ENCODE measurements at regions of chr16 and their contacts with region 1.

Region 1: DNA sequence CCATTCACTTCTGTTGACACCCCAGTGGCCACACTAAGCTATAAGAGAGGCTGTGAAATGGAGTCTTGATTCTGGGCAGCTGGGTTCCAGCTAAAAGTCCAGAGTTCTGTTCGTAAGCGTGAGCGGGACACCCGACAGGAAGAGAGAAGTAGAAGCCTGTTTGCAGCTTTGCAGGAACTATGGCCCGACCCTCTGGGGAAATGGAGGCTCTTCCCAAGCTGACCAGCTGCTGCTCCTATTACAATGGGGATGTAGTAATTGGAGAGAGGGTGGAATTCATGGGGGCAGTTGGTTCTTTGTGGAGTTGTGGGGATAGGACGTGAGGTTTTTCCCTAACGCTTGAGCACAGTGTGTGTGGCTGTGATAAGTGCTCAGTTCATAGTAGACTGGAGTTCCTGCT is 28.4 kb downstream of the UBALD1 start:
- DNase-seq: no peak
- H3K4me3 ChIP-seq: no peak overlapping the region
- H3K27me3 ChIP-seq: peaks cover 1% of the 10 kb centered on the region; the same call in 1 of the 2 replicates
- CTCF ChIP-seq: no peak

Region 2: GRCh38 chr16:4574919-4575705 is 11.2 kb before region 1 on chr16:
- CTCF ChIA-PET with region 1: interaction called, 12 read pairs
- POLR2A ChIA-PET with region 1: no interaction called
- DNase-seq: no peak
- H3K4me3 ChIP-seq: no peak overlapping the region
- H3K27me3 ChIP-seq: no peaks in the 10 kb centered on the region; the same call in 1 of the 2 replicates
- CTCF ChIP-seq: no peak

Region 3: GRCh38 chr16:4597174-4597573 is 10.9 kb after region 1 on chr16:
- CTCF ChIA-PET with region 1: interaction called, 33 read pairs
- POLR2A ChIA-PET with region 1: no interaction called
- DNase-seq: no peak
- H3K4me3 ChIP-seq: no peak overlapping the region
- H3K27me3 ChIP-seq: peaks cover 5% of the 10 kb centered on the region
- CTCF ChIP-seq: no peak

Region 4: DNA sequence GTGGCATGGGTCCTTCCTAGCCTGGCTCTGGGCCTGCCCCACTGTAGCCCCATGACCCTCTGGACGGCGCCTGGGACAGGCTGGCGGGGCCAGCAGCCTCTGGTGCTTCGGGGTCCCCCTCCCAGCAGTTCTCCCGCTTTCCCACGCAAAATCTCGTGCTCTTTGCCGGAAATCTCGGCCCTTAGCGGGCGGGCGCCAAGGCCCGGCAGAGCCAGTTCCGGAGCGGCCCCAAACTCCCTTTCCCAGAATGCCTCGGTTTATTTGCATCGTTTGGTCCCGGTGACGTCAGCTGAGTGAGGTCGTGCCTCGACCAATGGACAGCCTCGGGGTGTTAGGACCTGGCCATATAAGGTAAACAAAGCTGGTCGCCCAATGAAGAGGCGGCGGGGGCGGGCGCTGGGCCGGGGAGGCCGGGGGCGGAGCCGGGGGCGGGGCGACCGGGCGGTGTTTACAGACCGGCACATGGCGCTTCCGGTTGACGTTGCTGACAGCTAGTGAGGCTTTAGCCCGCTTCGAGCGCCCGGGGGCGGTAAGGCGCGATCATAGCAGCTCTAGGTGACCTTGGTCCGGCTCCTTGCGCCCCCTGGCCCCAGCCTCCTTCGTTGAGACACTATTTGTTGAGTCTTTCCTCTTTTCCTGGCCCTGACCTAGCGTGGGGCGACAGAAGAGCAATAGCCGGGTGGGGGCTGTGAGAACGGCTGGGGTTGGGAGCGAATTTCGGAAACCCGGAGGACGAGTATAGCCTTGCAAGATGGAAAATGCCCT is 29.9 kb after region 1 on chr16:
- CTCF ChIA-PET with region 1: interaction called, 14 read pairs
- POLR2A ChIA-PET with region 1: no interaction called
- DNase-seq: peak; percentile 98
- H3K4me3 ChIP-seq: peak overlapping the region; percentile 67
- H3K27me3 ChIP-seq: no peaks in the 10 kb centered on the region
- CTCF ChIP-seq: peak; percentile 48

Region 5: GRCh38 chr16:4734063-4734729 is 147.9 kb after region 1 on chr16 and contains the starts of genes ANKS3 and DNAAF8:
- CTCF ChIA-PET with region 1: no interaction called
- POLR2A ChIA-PET with region 1: no interaction called
- DNase-seq: peak; percentile 89
- H3K4me3 ChIP-seq: peak within 1 kb of the TSS; percentile 86
- H3K27me3 ChIP-seq: no peaks in the 10 kb centered on the region
- CTCF ChIP-seq: no peak
- polyA plus RNA-seq, gene ANKS3: 14.6 and 23.7 TPM in 2 replicates
- polyA plus RNA-seq, gene DNAAF8: 1.9 and 2.2 TPM in 2 replicates